AG04449 (cell line): ENCODE measurements at regions of chr2 and their contacts with region 1.

Region 1: DNA sequence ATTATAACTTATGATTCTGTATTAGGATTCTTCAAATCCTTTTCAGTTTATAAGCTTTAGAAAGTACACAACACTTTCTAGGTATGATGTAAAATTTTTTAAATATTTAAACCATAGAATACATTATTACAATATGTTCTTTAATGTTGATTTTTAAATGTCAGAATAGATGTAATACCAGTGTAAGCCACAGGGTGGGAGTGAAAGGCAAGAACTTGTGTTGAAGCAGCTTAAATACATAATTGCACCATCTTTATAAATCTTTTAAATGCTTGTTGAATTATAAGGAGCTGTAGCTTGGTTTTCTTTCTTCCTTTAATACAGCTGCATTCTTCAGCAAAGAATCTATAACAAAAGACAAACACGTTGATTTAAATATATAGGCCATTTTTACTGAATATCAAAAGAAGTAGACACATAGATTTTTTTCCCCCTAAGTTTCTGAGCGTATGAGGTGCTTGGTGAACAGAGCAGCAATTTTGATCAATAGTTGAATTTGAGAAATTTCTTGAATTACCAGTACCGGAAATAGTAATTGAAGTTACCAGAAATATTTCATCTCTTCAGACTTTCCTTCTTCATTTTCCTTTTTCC is 63.0 kb downstream of the TANK start:
- DNase-seq: no peak
- H3K4me3 ChIP-seq: no peak overlapping the region
- CTCF ChIP-seq: peak; percentile 33

Region 2: GRCh38 chr2:161208527-161209139 is 14.6 kb before region 1 on chr2:
- CTCF ChIA-PET with region 1: interaction called, 15 read pairs
- POLR2A ChIA-PET with region 1: no interaction called
- DNase-seq: peak; percentile 17
- H3K4me3 ChIP-seq: no peak overlapping the region
- CTCF ChIP-seq: no peak

Region 3: DNA sequence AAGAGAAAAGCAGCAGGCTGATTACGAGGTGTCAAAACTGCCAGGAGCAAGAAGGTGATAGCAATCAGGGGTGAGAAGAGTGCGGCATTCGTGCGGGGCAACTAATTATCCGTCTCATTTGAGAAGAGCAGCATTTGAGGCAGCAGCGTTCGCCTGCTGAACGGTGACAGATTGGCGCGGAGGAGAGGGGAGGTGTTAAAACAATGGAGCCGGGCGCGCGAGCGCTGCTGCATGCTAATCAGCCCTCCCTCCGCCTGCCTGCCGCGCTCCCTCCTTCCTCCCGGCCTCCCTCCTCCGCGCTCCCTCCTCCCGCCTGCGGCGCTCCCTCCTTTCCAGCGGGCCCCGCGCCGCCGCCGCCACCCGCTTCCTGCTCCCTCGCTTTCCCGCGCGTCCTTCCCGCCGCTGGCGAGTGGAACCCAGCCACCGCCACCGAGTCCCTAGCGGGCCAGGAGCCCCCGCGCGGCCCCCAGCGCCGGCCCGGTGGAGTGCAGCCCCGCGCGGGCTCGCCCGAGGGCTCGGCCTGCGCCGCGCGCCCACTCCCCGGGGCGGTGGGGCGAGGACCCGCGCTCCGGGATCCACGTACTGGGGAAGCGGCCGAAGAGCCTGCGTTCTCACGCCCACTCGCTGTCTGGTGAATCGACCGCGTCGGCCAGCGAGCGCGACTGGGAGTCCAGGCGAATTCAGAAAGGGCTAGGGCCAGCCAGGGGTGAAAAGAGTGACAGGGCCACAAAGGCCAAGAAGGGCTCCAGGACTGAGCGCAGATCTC is 15.5 kb after region 1 on chr2:
- CTCF ChIA-PET with region 1: interaction called, 19 read pairs
- POLR2A ChIA-PET with region 1: no interaction called
- DNase-seq: no peak
- H3K4me3 ChIP-seq: peak overlapping the region; percentile 64
- CTCF ChIP-seq: no peak

Region 4: GRCh38 chr2:161273038-161273760 is 50.0 kb after region 1 on chr2:
- CTCF ChIA-PET with region 1: interaction called, 80 read pairs
- POLR2A ChIA-PET with region 1: no interaction called
- DNase-seq: no peak
- H3K4me3 ChIP-seq: no peak overlapping the region
- CTCF ChIP-seq: peak; percentile 41